Vagina (tissue), 2 donors: ENCODE measurements at regions of chr5 and their contacts with region 1.

Region 1: DNA sequence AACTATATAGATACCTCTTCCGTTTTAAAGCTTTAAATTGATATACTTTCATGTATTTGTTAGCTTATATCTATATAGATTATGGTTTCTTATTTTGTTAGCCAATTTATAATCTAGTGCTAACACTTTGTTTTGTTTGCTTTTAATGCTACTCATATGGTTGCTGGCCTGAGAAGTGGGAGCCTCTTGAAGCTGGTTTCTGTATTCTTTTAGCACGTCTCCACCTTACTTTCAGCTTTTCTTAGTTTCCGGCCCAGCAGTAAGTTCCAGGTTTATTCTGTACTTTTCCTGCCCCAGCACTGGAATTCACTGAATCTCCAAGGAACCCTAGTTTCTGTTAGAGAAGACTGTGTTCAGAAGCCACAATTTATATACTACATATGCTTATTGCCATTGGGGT is 458.9 kb downstream of the PRR16 start:
- DNase-seq: no peak
- H3K4me3 ChIP-seq: no peak overlapping the region
- H3K27ac ChIP-seq: no peak overlapping the region
- H3K4me1 ChIP-seq: no peaks in the 10 kb centered on the region
- H3K27me3 ChIP-seq: no peaks in the 10 kb centered on the region
- CTCF ChIP-seq: no peak
- POLR2A ChIP-seq: no peak

Region 2: DNA sequence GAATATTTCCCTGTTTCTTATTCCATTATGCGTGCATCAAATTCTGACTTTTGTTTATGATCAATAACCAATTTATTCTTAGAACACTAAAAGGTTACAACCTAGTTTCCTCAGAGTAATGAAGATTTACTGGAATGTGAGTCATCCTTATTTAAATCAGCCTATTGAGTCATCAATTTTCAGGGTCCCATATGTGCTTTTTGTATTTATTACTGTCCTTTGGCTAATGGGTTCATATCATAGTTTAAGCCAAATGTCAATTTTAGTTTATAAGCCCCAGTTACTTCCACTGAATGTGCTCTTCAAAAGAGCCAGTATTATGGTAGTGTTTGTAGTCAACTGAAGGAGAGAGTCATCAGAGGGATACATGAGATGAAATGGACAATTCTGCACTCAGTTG is 99.7 kb before region 1 on chr5:
- intact Hi-C with region 1: loop called (anchors 5 kb)
- DNase-seq: no peak
- H3K4me3 ChIP-seq: no peak overlapping the region
- H3K27ac ChIP-seq: no peak overlapping the region
- H3K4me1 ChIP-seq: no peaks in the 10 kb centered on the region
- H3K27me3 ChIP-seq: no peaks in the 10 kb centered on the region
- CTCF ChIP-seq: no peak
- POLR2A ChIP-seq: no peak

Region 3: GRCh38 chr5:120942596-120943350 is 19.7 kb after region 1 on chr5:
- intact Hi-C with region 1: no loop called
- DNase-seq: no peak
- H3K4me3 ChIP-seq: no peak overlapping the region
- H3K27ac ChIP-seq: no peak overlapping the region
- H3K4me1 ChIP-seq: no peaks in the 10 kb centered on the region
- H3K27me3 ChIP-seq: no peaks in the 10 kb centered on the region
- CTCF ChIP-seq: no peak
- POLR2A ChIP-seq: no peak

Region 4: DNA sequence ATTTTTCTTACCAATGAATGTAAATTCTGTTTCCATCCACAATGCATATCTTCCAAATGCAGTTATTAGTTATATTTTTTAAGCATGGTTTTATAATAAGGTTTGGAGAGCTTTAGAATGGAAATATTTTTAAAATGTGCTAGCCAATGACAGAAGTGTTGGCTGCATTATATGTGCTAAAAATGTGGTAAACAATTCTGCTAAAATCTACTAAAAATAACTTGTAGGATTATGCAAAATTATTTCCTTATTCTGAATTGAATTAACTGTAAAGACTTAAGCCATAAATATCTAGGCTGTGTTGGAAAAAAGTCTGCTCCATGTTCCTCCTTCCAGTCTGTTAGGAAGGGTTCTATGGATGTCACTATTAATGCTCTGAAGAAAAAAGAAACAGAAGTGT is 44.3 kb after region 1 on chr5:
- intact Hi-C with region 1: no loop called
- DNase-seq: no peak
- H3K4me3 ChIP-seq: no peak overlapping the region
- H3K27ac ChIP-seq: no peak overlapping the region
- H3K4me1 ChIP-seq: no peaks in the 10 kb centered on the region
- H3K27me3 ChIP-seq: no peaks in the 10 kb centered on the region
- CTCF ChIP-seq: no peak
- POLR2A ChIP-seq: no peak

Region 5: GRCh38 chr5:121218086-121218485 is 295.1 kb after region 1 on chr5:
- intact Hi-C with region 1: no loop called
- DNase-seq: no peak
- H3K4me3 ChIP-seq: no peak overlapping the region
- H3K27ac ChIP-seq: no peak overlapping the region
- H3K4me1 ChIP-seq: no peaks in the 10 kb centered on the region
- H3K27me3 ChIP-seq: no peaks in the 10 kb centered on the region
- CTCF ChIP-seq: no peak
- POLR2A ChIP-seq: no peak